Activated T-helper 2 cell treated with anti-CD3 and anti-CD28 coated beads, Interferon-gamma antibody, Interleukin-2, Interleukin-4, amounts not matched to agents 10 μg/mL and 5 μg/mL and 100 μg/mL, durations not matched to agents 14 hours and 24 hours and 36 hours (primary cell): ENCODE measurements at regions of chr6 and their contacts with region 1.

Region 1: DNA sequence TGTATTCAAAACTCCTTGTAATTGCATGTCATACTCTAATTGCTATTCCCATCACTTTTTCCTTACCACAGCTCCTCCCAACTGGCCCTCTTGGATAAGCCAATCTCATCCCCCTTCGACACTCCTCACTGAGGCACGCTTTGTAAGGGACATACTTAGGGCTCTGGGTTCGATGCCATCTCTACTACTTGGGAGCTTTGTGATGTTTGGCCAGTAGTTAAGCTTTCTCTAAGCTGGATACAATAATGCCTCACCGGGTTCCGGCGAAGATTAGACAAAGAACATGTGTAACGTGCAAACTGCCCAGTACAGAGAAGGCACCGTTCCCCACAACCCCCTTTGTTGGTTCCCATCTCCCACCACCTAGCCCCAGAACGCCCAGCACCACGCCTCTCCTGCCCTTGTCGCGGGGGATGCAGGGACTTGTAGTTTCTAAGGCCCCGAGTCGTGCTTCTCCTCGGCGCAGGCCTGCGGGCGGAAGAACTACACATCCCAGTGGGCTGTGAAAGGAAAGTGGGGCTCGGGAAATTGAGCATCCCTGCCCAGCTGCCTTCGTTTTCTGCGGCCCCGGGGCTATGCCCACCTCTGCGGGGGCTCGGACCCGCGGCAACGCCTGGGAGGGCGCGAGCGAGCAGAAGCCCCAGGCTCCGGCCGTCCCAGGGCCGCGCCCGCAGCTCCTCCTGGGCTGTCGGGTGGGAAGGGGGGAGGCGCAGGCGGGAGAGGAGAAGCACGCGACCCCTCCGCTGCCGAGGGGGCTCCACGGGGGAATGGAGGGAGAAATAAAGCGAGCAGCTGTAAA is 1.1 kb upstream of the ZDHHC14 start:
- DNase-seq: peak; percentile 84
- H3K4me3 Mint-ChIP-seq: peak overlapping the region; percentile 74
- H3K27ac Mint-ChIP-seq: peak overlapping the region; percentile 59
- H3K4me1 Mint-ChIP-seq: peaks cover 29% of the 10 kb centered on the region
- H3K27me3 Mint-ChIP-seq: peaks cover 14% of the 10 kb centered on the region

Region 2: GRCh38 chr6:157139054-157139708 is 240.7 kb before region 1 on chr6:
- intact Hi-C with region 1: no loop called
- DNase-seq: no peak
- H3K4me3 Mint-ChIP-seq: no peak overlapping the region
- H3K27ac Mint-ChIP-seq: no peak overlapping the region
- H3K4me1 Mint-ChIP-seq: peaks cover 12% of the 10 kb centered on the region
- H3K27me3 Mint-ChIP-seq: no peaks in the 10 kb centered on the region

Region 3: GRCh38 chr6:157323255-157323965 is 56.4 kb before region 1 on chr6 and contains the start of gene TMEM242:
- intact Hi-C with region 1: loop called (anchors 1 kb)
- DNase-seq: peak; percentile 86
- H3K4me3 Mint-ChIP-seq: peak within 1 kb of the TSS; percentile 93
- H3K27ac Mint-ChIP-seq: peak within 1 kb of the TSS; percentile 80
- H3K4me1 Mint-ChIP-seq: peaks cover 33% of the 10 kb centered on the region
- H3K27me3 Mint-ChIP-seq: peaks cover 13% of the 10 kb centered on the region
- total RNA-seq, gene TMEM242: 11.8 and 11.9 TPM in 2 replicates

Region 4: DNA sequence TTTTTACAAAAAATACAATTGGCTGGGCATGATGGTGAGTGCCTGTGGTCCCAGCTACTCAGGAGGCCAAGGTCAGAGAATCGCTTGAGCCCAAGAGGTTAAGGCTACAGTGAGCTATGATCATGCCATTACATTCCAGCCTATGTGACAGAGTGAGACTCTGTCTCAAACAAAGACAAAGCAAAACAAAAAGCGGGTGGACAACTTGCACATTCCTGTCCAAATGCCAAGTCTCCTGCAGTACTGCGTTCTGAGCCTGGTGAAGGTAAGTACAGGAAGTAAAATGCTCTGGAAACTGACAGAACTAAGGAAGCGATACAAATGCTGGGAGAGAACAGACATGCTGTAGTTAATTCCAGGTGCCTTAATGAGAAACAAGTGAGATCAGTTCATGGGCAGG is 36.1 kb before region 1 on chr6:
- intact Hi-C with region 1: no loop called
- DNase-seq: no peak
- H3K4me3 Mint-ChIP-seq: no peak overlapping the region
- H3K27ac Mint-ChIP-seq: no peak overlapping the region
- H3K4me1 Mint-ChIP-seq: no peaks in the 10 kb centered on the region
- H3K27me3 Mint-ChIP-seq: peaks cover 38% of the 10 kb centered on the region

Region 5: GRCh38 chr6:157486572-157486971 is 106.7 kb after region 1 on chr6:
- intact Hi-C with region 1: no loop called
- DNase-seq: no peak
- H3K4me3 Mint-ChIP-seq: no peak overlapping the region
- H3K27ac Mint-ChIP-seq: peak overlapping the region; percentile 3
- H3K4me1 Mint-ChIP-seq: peaks cover 27% of the 10 kb centered on the region
- H3K27me3 Mint-ChIP-seq: peaks cover 8% of the 10 kb centered on the region

Region 6: DNA sequence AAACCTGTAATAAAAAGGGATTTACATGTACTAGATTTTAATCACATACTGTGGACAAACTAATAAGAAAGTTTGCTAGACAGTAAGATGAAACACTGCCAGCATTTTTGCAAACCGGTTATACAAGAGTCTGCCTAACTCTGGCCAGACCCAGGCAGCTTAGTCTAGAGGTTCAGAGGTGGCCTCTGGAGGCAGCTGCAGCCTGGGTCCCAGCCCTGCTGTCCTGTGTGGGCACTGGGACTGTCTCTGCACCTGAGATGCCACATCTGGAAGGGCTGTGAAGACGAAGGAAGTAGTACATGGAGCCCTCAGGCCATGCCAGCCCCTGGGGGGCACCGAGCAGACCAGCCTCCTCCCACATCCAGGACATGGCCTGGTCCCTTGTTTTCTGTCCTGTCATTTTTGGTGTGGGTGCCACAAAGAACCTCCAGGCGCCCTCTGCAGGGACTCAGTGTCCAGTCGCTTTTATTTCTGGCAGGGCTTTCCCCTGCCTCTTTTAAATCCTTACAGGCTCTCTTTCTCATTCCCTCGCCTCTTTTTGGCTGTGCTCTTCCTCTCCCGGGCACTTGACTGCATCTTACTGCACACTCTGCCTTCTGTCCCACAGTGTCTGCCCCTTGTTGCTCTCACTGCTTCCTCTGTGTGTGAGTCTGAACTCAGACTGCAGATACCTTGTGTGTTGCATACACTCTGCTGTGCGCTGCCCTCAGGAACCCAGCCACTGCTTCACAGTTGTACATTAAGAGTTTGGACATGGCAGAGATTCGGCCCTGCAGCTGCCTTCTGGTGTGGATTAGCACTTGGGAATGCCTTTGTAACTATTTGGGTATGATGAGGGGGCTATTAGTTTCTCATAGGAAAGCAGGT is 217.8 kb after region 1 on chr6:
- intact Hi-C with region 1: loop called (anchors 5 kb)
- DNase-seq: no peak
- H3K4me3 Mint-ChIP-seq: no peak overlapping the region
- H3K27ac Mint-ChIP-seq: no peak overlapping the region
- H3K4me1 Mint-ChIP-seq: peaks cover 3% of the 10 kb centered on the region
- H3K27me3 Mint-ChIP-seq: peaks cover 2% of the 10 kb centered on the region

Region 7: DNA sequence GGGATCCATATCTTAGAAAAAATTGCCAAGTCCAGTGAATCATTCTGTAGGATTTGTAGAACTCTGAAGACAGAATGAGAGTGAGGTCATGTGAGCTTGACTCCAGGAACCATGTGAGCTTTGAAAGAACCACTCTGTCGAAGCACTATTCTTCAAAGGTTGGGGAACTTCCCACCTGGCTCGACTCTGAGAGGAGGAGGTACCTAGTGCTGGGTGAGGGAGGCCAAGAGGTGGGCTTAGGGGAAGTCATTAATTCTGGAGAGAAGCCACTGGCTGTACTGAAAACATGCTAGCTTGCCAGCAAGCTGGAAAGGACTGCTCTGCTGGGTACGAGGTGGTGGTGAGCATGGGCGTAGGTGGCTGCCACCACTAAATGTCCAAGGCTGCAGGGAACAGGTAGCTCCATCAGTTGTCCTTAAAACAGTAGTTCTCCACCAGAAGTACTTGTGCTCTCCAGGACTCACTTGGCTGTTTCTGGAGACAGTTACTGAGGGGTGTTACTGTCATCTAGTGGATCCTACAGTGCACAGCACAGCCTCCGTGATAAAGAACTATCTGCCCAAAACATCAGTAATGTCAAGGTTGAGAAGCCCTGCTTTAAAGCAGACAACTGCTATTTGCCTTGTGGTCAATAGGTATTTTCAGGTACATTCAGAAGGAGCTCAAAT is 567.1 kb after region 1 on chr6:
- intact Hi-C with region 1: loop called (anchors 10 kb)
- DNase-seq: no peak
- H3K4me3 Mint-ChIP-seq: no peak overlapping the region
- H3K27ac Mint-ChIP-seq: no peak overlapping the region
- H3K4me1 Mint-ChIP-seq: peaks cover 34% of the 10 kb centered on the region
- H3K27me3 Mint-ChIP-seq: peaks cover 17% of the 10 kb centered on the region